Activated B cell treated with CpG ODN at 0.5 μM for 24 hours (primary cell): ENCODE measurements at regions of chr12 and their contacts with region 1.

Region 1: GRCh38 chr12:7806863-7807487 is 17.8 kb downstream of the NANOG start:
- DNase-seq: peak; percentile 25
- ATAC-seq: peak; percentile 56
- H3K4me3 Mint-ChIP-seq: no peak overlapping the region
- H3K27ac Mint-ChIP-seq: no peak overlapping the region
- H3K4me1 Mint-ChIP-seq: no peaks in the 10 kb centered on the region
- H3K27me3 Mint-ChIP-seq: peaks cover 3% of the 10 kb centered on the region
- CTCF ChIP-seq: peak; percentile 59

Region 2: DNA sequence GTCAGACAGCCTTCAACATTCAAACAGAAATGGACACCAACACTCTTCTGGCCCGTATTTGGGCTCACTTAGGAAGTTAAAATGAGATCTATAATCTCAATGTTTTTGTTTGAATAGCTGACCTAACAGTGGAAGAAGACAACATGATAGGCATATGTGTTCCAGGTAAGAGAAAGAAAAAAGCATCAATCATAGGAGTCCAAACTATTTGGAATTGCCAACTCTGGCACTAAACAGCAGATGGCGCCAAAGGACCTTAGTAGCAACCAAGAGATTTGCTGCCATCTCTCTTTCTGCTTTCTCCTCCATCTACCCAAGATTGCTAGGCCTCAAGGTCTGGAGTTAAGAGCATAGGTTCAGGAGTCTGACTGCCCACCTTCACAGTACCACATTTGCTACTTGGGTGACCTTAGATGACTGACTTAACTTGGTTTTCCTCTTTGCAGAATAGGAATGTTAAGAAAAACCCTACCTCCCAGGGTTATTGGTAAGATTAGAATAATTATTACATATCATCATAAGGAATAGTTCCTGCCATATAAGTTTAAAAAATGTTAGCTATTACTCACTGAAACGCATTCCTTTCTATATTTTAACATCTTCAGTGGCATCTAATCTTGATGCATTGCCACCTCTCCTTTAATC is 587.3 kb before region 1 on chr12:
- CTCF ChIA-PET with region 1: interaction called, 7 read pairs
- POLR2A ChIA-PET with region 1: no interaction called
- intact Hi-C with region 1: loop called (anchors 1 kb)
- DNase-seq: peak; percentile 24
- ATAC-seq: peak; percentile 64
- H3K4me3 Mint-ChIP-seq: no peak overlapping the region
- H3K27ac Mint-ChIP-seq: no peak overlapping the region
- H3K4me1 Mint-ChIP-seq: no peaks in the 10 kb centered on the region
- H3K27me3 Mint-ChIP-seq: no peaks in the 10 kb centered on the region
- CTCF ChIP-seq: peak; percentile 90

Region 3: GRCh38 chr12:7571257-7571656 is 235.7 kb before region 1 on chr12:
- CTCF ChIA-PET with region 1: no interaction called
- POLR2A ChIA-PET with region 1: no interaction called
- intact Hi-C with region 1: no loop called
- DNase-seq: no peak
- ATAC-seq: no peak
- H3K4me3 Mint-ChIP-seq: no peak overlapping the region
- H3K27ac Mint-ChIP-seq: no peak overlapping the region
- H3K4me1 Mint-ChIP-seq: no peaks in the 10 kb centered on the region
- H3K27me3 Mint-ChIP-seq: peaks cover 3% of the 10 kb centered on the region
- CTCF ChIP-seq: no peak

Region 4: GRCh38 chr12:7583571-7583970 is 223.4 kb before region 1 on chr12:
- CTCF ChIA-PET with region 1: no interaction called
- POLR2A ChIA-PET with region 1: no interaction called
- intact Hi-C with region 1: loop called (anchors 2 kb)
- DNase-seq: no peak
- ATAC-seq: no peak
- H3K4me3 Mint-ChIP-seq: no peak overlapping the region
- H3K27ac Mint-ChIP-seq: no peak overlapping the region
- H3K4me1 Mint-ChIP-seq: peaks cover 3% of the 10 kb centered on the region
- H3K27me3 Mint-ChIP-seq: peaks cover 12% of the 10 kb centered on the region
- CTCF ChIP-seq: no peak

Region 5: GRCh38 chr12:7678738-7679137 is 128.2 kb before region 1 on chr12:
- CTCF ChIA-PET with region 1: interaction called, 8 read pairs
- POLR2A ChIA-PET with region 1: no interaction called
- intact Hi-C with region 1: loop called (anchors 1 kb)
- DNase-seq: no peak
- ATAC-seq: no peak
- H3K4me3 Mint-ChIP-seq: no peak overlapping the region
- H3K27ac Mint-ChIP-seq: no peak overlapping the region
- H3K4me1 Mint-ChIP-seq: peaks cover 25% of the 10 kb centered on the region
- H3K27me3 Mint-ChIP-seq: peaks cover 2% of the 10 kb centered on the region
- CTCF ChIP-seq: no peak

Region 6: GRCh38 chr12:7716381-7716780 is 90.6 kb before region 1 on chr12:
- CTCF ChIA-PET with region 1: interaction called, 3 read pairs
- POLR2A ChIA-PET with region 1: no interaction called
- intact Hi-C with region 1: loop called (anchors 2 kb)
- DNase-seq: no peak
- ATAC-seq: no peak
- H3K4me3 Mint-ChIP-seq: no peak overlapping the region
- H3K27ac Mint-ChIP-seq: no peak overlapping the region
- H3K4me1 Mint-ChIP-seq: no peaks in the 10 kb centered on the region
- H3K27me3 Mint-ChIP-seq: peaks cover 5% of the 10 kb centered on the region
- CTCF ChIP-seq: no peak